K562 (cell line): ENCODE measurements at regions of chr11 and their contacts with region 1.

Region 1: GRCh38 chr11:119323538-119324033 is 6.7 kb upstream of the MCAM start:
- DNase-seq: peak; percentile 56 to 86 (median 62)
- ATAC-seq: no peak
- H3K4me3 ChIP-seq: no peak overlapping the region
- H3K27ac ChIP-seq: no peak overlapping the region
- H3K4me1 ChIP-seq: peaks cover 27 to 40% of the 10 kb centered on the region in 2 experiments
- H3K27me3 ChIP-seq: no peaks in the 10 kb centered on the region; a peak in 1 of 5 replicates
- CTCF ChIP-seq: peak; percentile 83 to 94 (median 88)
- EP300 ChIP-seq: no peak; the same call in 1 of the 2 replicates
- POLR2A ChIP-seq: no peak
- RAD21 ChIP-seq: peak; percentile 57 to 81

Region 2: GRCh38 chr11:119306373-119306890 is 17.2 kb before region 1 on chr11:
- CTCF ChIA-PET with region 1: no interaction called
- POLR2A ChIA-PET with region 1: interaction called, 14 read pairs
- in situ Hi-C with region 1: no loop called
- intact Hi-C with region 1: no loop called
- DNase-seq: no peak
- ATAC-seq: peak; percentile 19; the same call in 2 of the 3 replicates
- H3K4me3 ChIP-seq: no peak overlapping the region
- H3K27ac ChIP-seq: no peak overlapping the region; the same call in 2 of the 3 replicates
- H3K4me1 ChIP-seq: peaks cover 0 to 8% of the 10 kb centered on the region in 2 experiments; a peak in 2 of 5 replicates
- H3K27me3 ChIP-seq: no peaks in the 10 kb centered on the region
- CTCF ChIP-seq: no peak
- EP300 ChIP-seq: no peak
- POLR2A ChIP-seq: no peak
- RAD21 ChIP-seq: no peak

Region 3: DNA sequence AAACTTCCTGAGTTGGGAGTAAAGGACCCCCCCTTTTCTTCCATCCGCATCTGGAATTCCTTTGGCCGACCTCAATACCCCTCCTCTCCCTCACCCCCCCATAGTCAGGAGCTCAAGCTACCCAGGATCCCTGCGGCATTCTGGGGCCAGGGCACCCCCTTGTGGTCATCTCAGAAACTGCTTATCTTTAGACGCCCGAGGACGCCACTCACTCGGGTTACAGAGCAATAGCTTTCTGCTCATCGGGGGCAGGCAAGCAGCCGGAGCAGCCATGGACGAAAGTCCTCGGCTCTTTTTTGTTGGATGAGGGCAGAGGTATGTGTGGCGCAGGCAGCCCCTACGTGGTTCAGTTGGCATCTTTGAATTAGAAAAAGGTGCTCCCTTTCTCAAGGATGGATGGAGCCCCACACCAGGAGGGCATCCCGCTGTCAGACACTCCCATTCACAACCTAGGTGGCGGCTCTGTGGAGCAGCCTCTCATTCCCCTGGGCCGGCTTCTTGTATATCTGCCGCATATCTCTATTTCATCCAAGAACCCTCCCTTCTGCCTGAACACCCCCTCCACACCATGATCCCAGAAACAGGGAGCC is 14.8 kb after region 1 on chr11:
- CTCF ChIA-PET with region 1: interaction called, 3 read pairs
- POLR2A ChIA-PET with region 1: interaction called, 22 read pairs
- in situ Hi-C with region 1: no loop called
- intact Hi-C with region 1: no loop called
- DNase-seq: peak; percentile 74 to 89 (median 82)
- ATAC-seq: peak; percentile 73
- H3K4me3 ChIP-seq: no peak overlapping the region
- H3K27ac ChIP-seq: 0 out of 3 replicates have a peak overlapping the region, but pooled peaks have one; percentile 23
- H3K4me1 ChIP-seq: peaks cover 23 to 69% of the 10 kb centered on the region in 2 experiments; a peak in 4 of 5 replicates
- H3K27me3 ChIP-seq: peaks cover 0 to 14% of the 10 kb centered on the region in 2 experiments; a peak in 3 of 5 replicates
- CTCF ChIP-seq: peak; percentile 85 to 93 (median 90)
- EP300 ChIP-seq: no peak
- POLR2A ChIP-seq: no peak
- RAD21 ChIP-seq: peak; percentile 65 to 69

Region 4: GRCh38 chr11:119373921-119374631 is 50.5 kb after region 1 on chr11:
- CTCF ChIA-PET with region 1: no interaction called
- POLR2A ChIA-PET with region 1: interaction called, 3 read pairs
- in situ Hi-C with region 1: no loop called
- intact Hi-C with region 1: loop called (anchors 2 kb)
- DNase-seq: peak; percentile 58 to 77 (median 65)
- ATAC-seq: peak; percentile 54
- H3K4me3 ChIP-seq: no peak overlapping the region
- H3K27ac ChIP-seq: no peak overlapping the region; the same call in 2 of the 3 replicates
- H3K4me1 ChIP-seq: peaks cover 66 to 77% of the 10 kb centered on the region in 2 experiments
- H3K27me3 ChIP-seq: no peaks in the 10 kb centered on the region
- CTCF ChIP-seq: peak; percentile 88 to 94 (median 92)
- EP300 ChIP-seq: peak; percentile 12; the same call in 1 of the 2 replicates
- POLR2A ChIP-seq: no peak
- RAD21 ChIP-seq: peak; percentile 72 to 93

Region 5: GRCh38 chr11:119584193-119585037 is 260.8 kb after region 1 on chr11:
- CTCF ChIA-PET with region 1: no interaction called
- POLR2A ChIA-PET with region 1: no interaction called
- in situ Hi-C with region 1: no loop called
- intact Hi-C with region 1: no loop called
- DNase-seq: peak; percentile 76 to 80 (median 77)
- ATAC-seq: peak; percentile 91
- H3K4me3 ChIP-seq: peak overlapping the region; percentile 30
- H3K27ac ChIP-seq: peak overlapping the region; percentile 44; the same call in 2 of the 3 replicates
- H3K4me1 ChIP-seq: peaks cover 5 to 19% of the 10 kb centered on the region in 2 experiments
- H3K27me3 ChIP-seq: peaks cover 0 to 18% of the 10 kb centered on the region in 2 experiments; a peak in 2 of 5 replicates
- CTCF ChIP-seq: no peak; a peak in 1 of 6 replicates
- EP300 ChIP-seq: peak; percentile 48; the same call in 1 of the 2 replicates
- POLR2A ChIP-seq: 0 out of 2 replicates have a peak, but pooled peaks have one; percentile 37
- RAD21 ChIP-seq: no peak